Activated CD8-positive, alpha-beta T cell treated with anti-CD3 and anti-CD28 coated beads for 36 hours (primary cell): ENCODE measurements at regions of chr20 and their contacts with region 1.

Region 1: GRCh38 chr20:9407805-9408421 is 106.5 kb upstream of the LAMP5 start:
- DNase-seq: peak; percentile 73
- ATAC-seq: peak; percentile 75
- H3K4me3 Mint-ChIP-seq: no peak overlapping the region
- H3K27ac Mint-ChIP-seq: no peak overlapping the region
- H3K4me1 Mint-ChIP-seq: no peaks in the 10 kb centered on the region
- H3K27me3 Mint-ChIP-seq: no peaks in the 10 kb centered on the region
- CTCF ChIP-seq: peak; percentile 78

Region 2: GRCh38 chr20:9301129-9302090 is 106.5 kb before region 1 on chr20:
- CTCF ChIA-PET with region 1: no interaction called
- POLR2A ChIA-PET with region 1: no interaction called
- intact Hi-C with region 1: no loop called
- DNase-seq: no peak
- ATAC-seq: no peak
- H3K4me3 Mint-ChIP-seq: no peak overlapping the region
- H3K27ac Mint-ChIP-seq: no peak overlapping the region
- H3K4me1 Mint-ChIP-seq: no peaks in the 10 kb centered on the region
- H3K27me3 Mint-ChIP-seq: no peaks in the 10 kb centered on the region
- CTCF ChIP-seq: no peak

Region 3: GRCh38 chr20:9392892-9393857 is 14.7 kb before region 1 on chr20:
- CTCF ChIA-PET with region 1: interaction called, 22 read pairs
- POLR2A ChIA-PET with region 1: no interaction called
- intact Hi-C with region 1: no loop called
- DNase-seq: peak; percentile 12
- ATAC-seq: no peak
- H3K4me3 Mint-ChIP-seq: no peak overlapping the region
- H3K27ac Mint-ChIP-seq: no peak overlapping the region
- H3K4me1 Mint-ChIP-seq: no peaks in the 10 kb centered on the region
- H3K27me3 Mint-ChIP-seq: no peaks in the 10 kb centered on the region
- CTCF ChIP-seq: peak; percentile 7

Region 4: DNA sequence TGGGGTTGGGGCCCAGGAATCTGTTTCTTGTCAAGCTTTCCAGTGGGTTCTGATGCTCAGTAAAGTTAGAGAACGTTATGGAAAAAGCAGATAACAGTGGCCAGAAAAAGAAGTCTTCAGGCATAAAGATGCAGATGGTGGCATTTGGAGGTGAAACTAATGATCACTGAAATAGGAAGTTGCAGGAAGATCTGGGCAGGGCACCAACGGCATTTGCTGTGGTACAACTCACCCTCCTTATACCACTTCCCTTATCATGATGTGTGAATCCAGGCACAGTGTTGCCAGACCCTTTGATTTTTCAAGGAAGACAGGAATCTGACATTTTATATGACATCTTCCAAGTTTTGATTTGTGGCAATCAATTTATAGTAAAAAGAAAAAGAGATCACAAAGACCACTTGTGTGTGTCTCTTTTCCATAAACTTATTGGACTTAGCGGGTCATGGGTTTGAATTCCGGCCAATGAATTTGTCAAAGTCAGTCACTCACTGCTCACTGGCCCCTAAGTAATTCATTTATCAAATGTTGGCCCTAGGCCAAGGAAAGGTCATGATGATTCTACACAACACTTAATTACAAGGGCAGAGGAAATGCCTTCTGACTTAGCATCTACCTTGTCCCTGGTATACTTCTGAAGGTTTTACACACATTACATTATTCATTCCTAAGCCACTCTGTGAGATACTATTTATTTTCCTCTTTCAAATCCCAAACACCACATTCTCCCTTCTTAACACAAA is 144.1 kb after region 1 on chr20:
- CTCF ChIA-PET with region 1: no interaction called
- POLR2A ChIA-PET with region 1: no interaction called
- intact Hi-C with region 1: no loop called
- DNase-seq: no peak
- ATAC-seq: no peak
- H3K4me3 Mint-ChIP-seq: no peak overlapping the region
- H3K27ac Mint-ChIP-seq: no peak overlapping the region
- H3K4me1 Mint-ChIP-seq: no peaks in the 10 kb centered on the region
- H3K27me3 Mint-ChIP-seq: no peaks in the 10 kb centered on the region
- CTCF ChIP-seq: no peak

Region 5: DNA sequence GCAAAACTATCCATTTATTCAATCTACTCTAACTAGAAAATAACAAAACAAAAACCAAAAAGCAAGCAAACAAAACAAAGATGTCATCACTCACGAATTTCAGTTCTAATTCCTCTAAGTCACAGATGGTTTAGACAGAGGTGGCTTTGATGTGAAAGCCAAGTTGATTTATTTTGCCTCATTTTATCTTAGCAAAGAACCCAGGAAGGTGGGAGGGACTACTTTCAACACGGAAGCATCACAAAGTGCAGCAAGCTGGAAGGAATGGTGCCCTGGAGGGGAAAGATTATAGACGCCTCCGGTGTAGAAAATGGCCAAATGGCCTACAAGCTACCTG is 194.9 kb after region 1 on chr20:
- CTCF ChIA-PET with region 1: interaction called, 106 read pairs
- POLR2A ChIA-PET with region 1: no interaction called
- intact Hi-C with region 1: no loop called
- DNase-seq: no peak
- ATAC-seq: no peak
- H3K4me3 Mint-ChIP-seq: no peak overlapping the region
- H3K27ac Mint-ChIP-seq: no peak overlapping the region
- H3K4me1 Mint-ChIP-seq: no peaks in the 10 kb centered on the region
- H3K27me3 Mint-ChIP-seq: peaks cover 3% of the 10 kb centered on the region
- CTCF ChIP-seq: no peak

Region 6: GRCh38 chr20:9609887-9610502 is 202.1 kb after region 1 on chr20:
- CTCF ChIA-PET with region 1: interaction called, 106 read pairs
- POLR2A ChIA-PET with region 1: no interaction called
- intact Hi-C with region 1: loop called (anchors 1 kb)
- DNase-seq: peak; percentile 72
- ATAC-seq: no peak
- H3K4me3 Mint-ChIP-seq: no peak overlapping the region
- H3K27ac Mint-ChIP-seq: no peak overlapping the region
- H3K4me1 Mint-ChIP-seq: no peaks in the 10 kb centered on the region
- H3K27me3 Mint-ChIP-seq: no peaks in the 10 kb centered on the region
- CTCF ChIP-seq: peak; percentile 67

Region 7: GRCh38 chr20:9616833-9617489 is 209.0 kb after region 1 on chr20:
- CTCF ChIA-PET with region 1: interaction called, 106 read pairs
- POLR2A ChIA-PET with region 1: no interaction called
- intact Hi-C with region 1: no loop called
- DNase-seq: peak; percentile 69
- ATAC-seq: peak; percentile 51
- H3K4me3 Mint-ChIP-seq: no peak overlapping the region
- H3K27ac Mint-ChIP-seq: no peak overlapping the region
- H3K4me1 Mint-ChIP-seq: no peaks in the 10 kb centered on the region
- H3K27me3 Mint-ChIP-seq: no peaks in the 10 kb centered on the region
- CTCF ChIP-seq: peak; percentile 91

Region 8: GRCh38 chr20:9912858-9913434 is 505.0 kb after region 1 on chr20:
- CTCF ChIA-PET with region 1: interaction called, 5 read pairs
- POLR2A ChIA-PET with region 1: no interaction called
- intact Hi-C with region 1: loop called (anchors 10 kb)
- DNase-seq: peak; percentile 54
- ATAC-seq: no peak
- H3K4me3 Mint-ChIP-seq: no peak overlapping the region
- H3K27ac Mint-ChIP-seq: no peak overlapping the region
- H3K4me1 Mint-ChIP-seq: no peaks in the 10 kb centered on the region
- H3K27me3 Mint-ChIP-seq: peaks cover 12% of the 10 kb centered on the region
- CTCF ChIP-seq: peak; percentile 74